Ovary (tissue), 10 donors: ENCODE measurements at regions of chr1 and their contacts with region 1.

Region 1: DNA sequence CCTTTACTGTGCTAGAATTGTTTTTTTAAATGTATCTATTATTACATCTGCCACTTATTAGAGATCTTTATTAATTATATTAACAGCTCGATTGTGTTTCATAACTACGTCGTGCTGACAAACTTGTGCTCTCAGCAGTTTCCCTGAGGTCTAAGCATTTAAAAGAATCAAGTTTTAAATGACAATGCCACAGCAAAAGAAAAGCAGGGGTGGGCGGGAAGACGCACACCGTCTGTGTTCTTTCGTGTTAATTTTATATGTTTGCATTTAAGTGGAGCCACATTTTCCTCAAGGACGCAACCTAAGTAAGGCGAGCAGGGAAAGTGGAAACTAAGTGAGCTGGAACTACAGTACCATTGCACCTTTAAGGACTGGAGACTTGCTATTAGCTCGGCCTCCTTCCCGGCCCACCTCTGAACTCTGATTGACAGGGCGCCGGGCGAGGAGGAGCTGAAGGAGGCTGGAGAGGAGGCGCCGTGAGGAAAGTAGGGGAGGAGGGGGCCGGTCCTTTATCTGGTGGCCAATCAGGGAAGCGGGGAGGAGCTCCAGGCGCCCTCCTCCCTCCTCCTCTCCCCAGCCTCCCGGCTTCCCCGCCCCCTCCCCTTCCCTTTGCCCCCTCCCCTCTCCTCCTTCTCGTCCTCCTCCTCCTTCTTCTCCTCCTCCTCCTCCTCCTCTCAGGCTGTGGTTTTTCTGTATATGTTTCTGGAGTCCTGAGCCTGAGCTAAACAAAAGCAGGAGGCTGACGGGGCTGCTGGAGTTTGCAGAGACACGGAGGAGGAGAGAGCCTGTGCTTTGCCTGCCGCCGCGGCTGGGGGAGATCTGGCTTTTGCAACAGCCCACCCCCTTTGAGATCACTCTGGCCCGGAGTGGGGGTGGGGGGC is at the start of gene PBX1:
- DNase-seq: peak; percentile 95 to 98 (median 97)
- H3K4me3 ChIP-seq: peak within 1 kb of the TSS; percentile 71
- H3K27ac ChIP-seq: peak within 1 kb of the TSS; percentile 73 to 91
- H3K4me1 ChIP-seq: no peaks in the 10 kb centered on the region
- H3K27me3 ChIP-seq: no peaks in the 10 kb centered on the region
- CTCF ChIP-seq: no peak
- EP300 ChIP-seq: no peak
- POLR2A ChIP-seq: peak; percentile 78
- total RNA-seq, gene PBX1: 73.2 to 220 (median 144) TPM

Region 2: GRCh38 chr1:164337394-164337793 is 221.3 kb before region 1 on chr1:
- intact Hi-C with region 1: no loop called
- DNase-seq: no peak
- H3K4me3 ChIP-seq: no peak overlapping the region
- H3K27ac ChIP-seq: no peak overlapping the region
- H3K4me1 ChIP-seq: no peaks in the 10 kb centered on the region
- H3K27me3 ChIP-seq: no peaks in the 10 kb centered on the region
- CTCF ChIP-seq: no peak
- EP300 ChIP-seq: no peak
- POLR2A ChIP-seq: no peak

Region 3: DNA sequence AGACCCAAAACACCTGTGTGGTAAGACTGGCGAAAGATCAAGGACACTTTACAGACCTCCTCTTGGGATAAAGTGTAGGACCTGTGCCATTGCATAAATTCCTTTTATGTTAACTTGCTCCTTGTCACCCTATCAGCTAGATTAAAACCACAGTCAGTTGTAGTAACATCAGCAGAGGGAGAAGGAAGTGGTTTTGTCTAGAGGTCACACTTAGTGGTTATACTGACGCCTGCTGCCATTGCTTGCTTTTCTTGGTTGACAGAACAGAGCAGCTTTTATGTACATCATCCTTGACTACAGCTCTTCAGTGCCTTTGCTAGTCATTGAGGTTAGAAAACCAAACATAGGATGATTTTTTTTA is 101.7 kb after region 1 on chr1:
- intact Hi-C with region 1: no loop called
- DNase-seq: no peak
- H3K4me3 ChIP-seq: no peak overlapping the region
- H3K27ac ChIP-seq: no peak overlapping the region
- H3K4me1 ChIP-seq: peaks cover 15% of the 10 kb centered on the region
- H3K27me3 ChIP-seq: no peaks in the 10 kb centered on the region
- CTCF ChIP-seq: no peak
- EP300 ChIP-seq: no peak
- POLR2A ChIP-seq: no peak

Region 4: GRCh38 chr1:164794310-164794709 is 235.6 kb after region 1 on chr1:
- intact Hi-C with region 1: loop called in 3 of 4 experiments (anchors 10 kb)
- DNase-seq: peak in 2 of 5 donors; percentile 33 to 70
- H3K4me3 ChIP-seq: no peak overlapping the region
- H3K27ac ChIP-seq: no peak overlapping the region
- H3K4me1 ChIP-seq: peaks cover 18% of the 10 kb centered on the region
- H3K27me3 ChIP-seq: no peaks in the 10 kb centered on the region
- CTCF ChIP-seq: no peak
- EP300 ChIP-seq: no peak
- POLR2A ChIP-seq: no peak

Region 5: DNA sequence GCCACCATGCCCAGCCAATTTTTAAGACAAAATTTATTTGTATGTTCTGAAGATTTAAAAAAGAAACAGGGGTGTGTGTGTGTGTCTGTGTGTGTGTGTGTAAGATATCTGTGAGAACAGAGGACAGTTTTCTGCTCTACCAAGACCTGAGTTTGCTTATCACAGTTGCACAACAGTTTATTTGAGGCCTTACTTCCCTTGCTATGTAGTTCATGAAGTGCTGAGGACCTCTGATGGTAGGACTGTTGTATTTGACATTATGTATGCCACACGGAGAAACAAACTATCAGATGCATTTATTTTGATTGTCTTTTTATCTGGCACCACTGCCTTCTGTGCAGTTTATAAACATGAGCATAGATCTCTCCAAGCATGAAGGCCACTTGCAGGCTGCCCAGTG is 355.5 kb after region 1 on chr1:
- intact Hi-C with region 1: loop called in 1 of 4 experiments (anchors 5 kb)
- DNase-seq: no peak
- H3K4me3 ChIP-seq: no peak overlapping the region
- H3K27ac ChIP-seq: no peak overlapping the region
- H3K4me1 ChIP-seq: peaks cover 1% of the 10 kb centered on the region
- H3K27me3 ChIP-seq: no peaks in the 10 kb centered on the region
- CTCF ChIP-seq: peak in 2 of 3 donors; percentile 30 to 32
- EP300 ChIP-seq: no peak
- POLR2A ChIP-seq: no peak